Sciatic nerve (tissue), 2 donors: ENCODE measurements at regions of chr5 and their contacts with region 1.

Region 1: DNA sequence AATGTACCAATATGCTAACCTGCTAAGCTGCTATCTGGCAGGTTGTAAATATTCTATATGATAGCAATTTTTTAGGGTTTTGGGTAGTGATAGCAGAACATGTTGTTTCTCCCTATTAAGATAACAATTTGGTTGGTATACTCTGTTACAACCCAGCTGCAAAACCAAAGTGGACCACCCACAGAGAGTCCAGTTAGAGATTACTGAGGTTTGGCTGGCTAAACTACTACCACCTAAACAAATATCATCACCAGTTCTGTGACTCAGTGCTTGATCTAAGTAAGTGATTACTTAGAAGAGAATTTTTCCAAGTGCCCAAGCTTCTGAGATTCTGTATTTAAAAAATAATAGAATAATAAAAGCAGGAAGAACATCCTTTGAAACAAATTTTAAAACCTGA is 72.3 kb downstream of the XRCC4 start:
- DNase-seq: no peak
- ATAC-seq: peak; percentile 32

Region 2: DNA sequence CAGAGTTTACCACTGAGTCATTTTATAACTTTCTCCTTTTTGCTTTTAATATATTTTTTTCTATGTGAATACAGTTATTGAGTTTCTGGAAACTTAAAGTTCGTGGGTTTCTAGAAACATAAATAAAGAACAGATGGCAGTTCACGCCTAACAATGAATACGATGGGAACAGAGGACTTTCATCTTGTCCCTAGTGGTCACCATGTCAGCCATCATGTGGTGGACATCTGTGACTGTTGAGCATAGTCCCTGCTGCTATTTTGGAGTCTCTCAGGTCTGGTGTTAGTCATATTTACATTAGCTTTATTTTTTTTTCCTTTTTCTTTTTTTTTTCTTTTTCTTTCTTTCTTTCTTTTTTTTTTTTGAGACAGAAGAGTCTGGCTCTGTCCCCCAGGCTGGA is 12.9 kb after region 1 on chr5:
- intact Hi-C with region 1: loop called (anchors 2 kb)
- DNase-seq: no peak
- ATAC-seq: peak; percentile 61